ENCODE measurements at regions of chr12 and their contacts with region 1.

Region 1: GRCh38 chr12:40010899-40011774 is 94.7 kb downstream of the SLC2A13 start:
- DNase-seq: peak; percentile 43 to 56
- ATAC-seq: peak; percentile 67

Region 2: DNA sequence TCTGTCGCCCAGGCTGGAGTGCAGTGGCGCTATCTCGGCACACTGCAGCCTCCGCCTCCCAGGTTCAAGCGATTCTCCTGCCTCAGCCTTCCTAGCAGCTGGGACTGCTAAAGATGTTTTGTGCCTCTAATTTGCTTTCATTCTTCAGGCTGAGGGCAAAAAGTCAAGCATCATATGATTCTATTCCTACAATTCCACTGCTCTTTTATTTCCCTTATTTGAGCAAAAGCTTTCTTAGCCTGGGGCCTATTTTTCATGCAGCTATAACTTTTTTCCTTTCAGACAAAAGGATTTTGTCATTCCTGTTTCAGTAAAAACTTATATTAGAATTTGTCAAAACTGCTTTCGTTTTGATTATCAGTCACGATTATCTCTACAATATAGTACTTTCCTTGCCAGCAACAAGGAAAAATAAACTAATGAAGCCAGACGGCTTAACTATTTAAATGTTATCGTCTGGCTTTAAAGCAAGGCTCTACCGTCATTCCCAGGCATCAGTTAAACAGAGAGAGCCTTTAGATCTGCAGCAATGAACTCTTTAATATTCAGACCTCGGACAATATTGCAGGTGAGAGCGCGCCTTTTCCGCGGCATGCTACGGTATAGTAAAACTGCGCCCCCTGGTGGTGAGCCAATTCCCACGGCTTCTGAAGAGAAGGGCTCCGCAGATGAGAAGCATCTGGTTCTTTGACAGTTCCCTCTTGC is 96.1 kb after region 1 on chr12:
- intact Hi-C with region 1: loop called (anchors 2 to 10 kb)
- DNase-seq: peak; percentile 82 to 98
- ATAC-seq: peak; percentile 37